Endothelial cell of umbilical vein (primary cell): ENCODE measurements at regions of chr2 and their contacts with region 1.

Region 1: DNA sequence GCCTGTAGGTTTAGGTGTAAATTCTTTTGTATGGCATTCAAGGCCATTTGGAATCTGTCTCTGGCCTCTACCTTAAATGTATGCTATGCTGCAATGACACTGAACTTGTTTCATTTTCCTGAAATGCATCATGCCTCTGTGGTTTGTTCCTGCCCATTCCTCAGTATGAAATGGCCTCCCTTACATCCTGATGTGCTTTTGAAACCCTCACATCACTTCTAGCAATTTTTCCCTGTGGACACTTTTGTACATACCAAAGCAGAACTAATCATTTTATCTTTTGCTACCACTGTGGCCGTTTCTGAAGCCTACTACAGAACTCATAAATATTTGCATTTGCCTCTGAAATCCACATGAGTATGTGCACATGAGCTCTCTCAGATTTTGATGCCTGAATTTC is 557.2 kb downstream of the ERBB4 start:
- DNase-seq: peak; percentile 24
- H3K4me3 ChIP-seq: no peak overlapping the region
- H3K27ac ChIP-seq: peak overlapping the region; percentile 41
- H3K4me1 ChIP-seq: peaks cover 7% of the 10 kb centered on the region
- H3K27me3 ChIP-seq: no peaks in the 10 kb centered on the region
- CTCF ChIP-seq: no peak
- POLR2A ChIP-seq: no peak

Region 2: GRCh38 chr2:211751848-211752247 is 229.6 kb before region 1 on chr2:
- CTCF ChIA-PET with region 1: no interaction called
- POLR2A ChIA-PET with region 1: interaction called, 3 read pairs
- dilution Hi-C with region 1: no loop called
- intact Hi-C with region 1: loop called (anchors 10 kb)
- DNase-seq: peak; percentile 48
- H3K4me3 ChIP-seq: no peak overlapping the region
- H3K27ac ChIP-seq: no peak overlapping the region
- H3K4me1 ChIP-seq: peaks cover 7% of the 10 kb centered on the region
- H3K27me3 ChIP-seq: no peaks in the 10 kb centered on the region
- CTCF ChIP-seq: no peak
- POLR2A ChIP-seq: no peak

Region 3: GRCh38 chr2:211944572-211944971 is 36.9 kb before region 1 on chr2:
- CTCF ChIA-PET with region 1: no interaction called
- POLR2A ChIA-PET with region 1: no interaction called
- dilution Hi-C with region 1: no loop called
- intact Hi-C with region 1: no loop called
- DNase-seq: no peak
- H3K4me3 ChIP-seq: no peak overlapping the region
- H3K27ac ChIP-seq: no peak overlapping the region
- H3K4me1 ChIP-seq: no peaks in the 10 kb centered on the region
- H3K27me3 ChIP-seq: no peaks in the 10 kb centered on the region
- CTCF ChIP-seq: no peak
- POLR2A ChIP-seq: no peak

Region 4: GRCh38 chr2:212088353-212088752 is 106.9 kb after region 1 on chr2:
- CTCF ChIA-PET with region 1: no interaction called
- POLR2A ChIA-PET with region 1: no interaction called
- dilution Hi-C with region 1: no loop called
- intact Hi-C with region 1: no loop called
- DNase-seq: no peak
- H3K4me3 ChIP-seq: no peak overlapping the region
- H3K27ac ChIP-seq: no peak overlapping the region
- H3K4me1 ChIP-seq: no peaks in the 10 kb centered on the region
- H3K27me3 ChIP-seq: no peaks in the 10 kb centered on the region
- CTCF ChIP-seq: no peak
- POLR2A ChIP-seq: no peak